HCT116 (cell line): ENCODE measurements at regions of chr12 and their contacts with region 1.

Region 1: DNA sequence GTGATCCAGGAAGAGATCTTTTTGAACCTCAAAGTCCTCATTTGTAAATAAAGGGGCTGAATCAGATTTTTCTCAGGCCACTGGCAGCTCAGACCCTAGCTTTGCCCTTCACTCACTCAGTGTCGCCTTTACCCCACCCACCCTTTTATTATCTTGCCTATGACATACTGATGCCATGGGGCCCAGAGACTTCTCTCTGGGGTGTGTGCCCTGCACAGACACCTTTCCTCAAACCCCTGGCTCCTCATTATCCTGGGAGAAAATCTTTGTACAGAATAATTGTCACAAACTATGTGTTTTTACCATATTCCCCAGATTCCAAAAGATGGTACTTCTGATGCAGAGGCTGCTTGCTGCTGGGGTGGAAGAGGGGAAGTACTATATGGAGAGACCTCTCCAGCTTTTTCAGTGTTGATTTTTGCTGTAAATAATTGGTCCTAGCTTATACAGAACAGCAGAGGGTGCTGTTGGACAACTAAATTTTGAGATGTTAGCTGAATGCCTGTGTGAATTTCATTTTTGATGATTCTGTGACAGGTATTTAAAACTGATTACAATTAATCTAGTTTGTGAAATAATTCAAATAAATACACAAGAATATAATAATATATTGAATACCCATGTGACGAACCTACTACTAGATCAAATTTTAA is 53.9 kb upstream of the DCD start:
- DNase-seq: peak; percentile 37
- ATAC-seq: peak; percentile 78
- H3K4me3 ChIP-seq: no peak overlapping the region
- H3K27ac ChIP-seq: no peak overlapping the region
- H3K4me1 ChIP-seq: no peaks in the 10 kb centered on the region
- H3K27me3 ChIP-seq: peaks cover 36% of the 10 kb centered on the region
- CTCF ChIP-seq: peak; percentile 51 to 66 (median 61); a peak in 5 of 6 replicates
- POLR2A ChIP-seq: no peak
- RAD21 ChIP-seq: peak; percentile 71

Region 2: GRCh38 chr12:54191550-54192022 is 510.5 kb before region 1 on chr12:
- CTCF ChIA-PET with region 1: no interaction called
- POLR2A ChIA-PET with region 1: no interaction called
- RAD21 ChIA-PET with region 1: no interaction called
- intact Hi-C with region 1: no loop called
- DNase-seq: peak; percentile 77
- ATAC-seq: peak; percentile 71
- H3K4me3 ChIP-seq: no peak overlapping the region
- H3K27ac ChIP-seq: no peak overlapping the region
- H3K4me1 ChIP-seq: peaks cover 5 to 33% of the 10 kb centered on the region in 2 experiments
- H3K27me3 ChIP-seq: no peaks in the 10 kb centered on the region
- CTCF ChIP-seq: peak; percentile 80 to 92 (median 90)
- POLR2A ChIP-seq: no peak
- RAD21 ChIP-seq: peak; percentile 89

Region 3: GRCh38 chr12:54596526-54596946 is 105.5 kb before region 1 on chr12:
- CTCF ChIA-PET with region 1: interaction called, 12 read pairs
- POLR2A ChIA-PET with region 1: interaction called, 4 read pairs
- RAD21 ChIA-PET with region 1: no interaction called
- intact Hi-C with region 1: no loop called
- DNase-seq: peak; percentile 57
- ATAC-seq: peak; percentile 95
- H3K4me3 ChIP-seq: no peak overlapping the region
- H3K27ac ChIP-seq: no peak overlapping the region
- H3K4me1 ChIP-seq: no peaks in the 10 kb centered on the region
- H3K27me3 ChIP-seq: no peaks in the 10 kb centered on the region; the same call in 1 of the 2 replicates
- CTCF ChIP-seq: peak; percentile 69 to 91 (median 90)
- POLR2A ChIP-seq: no peak
- RAD21 ChIP-seq: peak; percentile 69

Region 4: GRCh38 chr12:54723379-54724256 is 21.6 kb after region 1 on chr12:
- CTCF ChIA-PET with region 1: interaction called, 12 read pairs
- POLR2A ChIA-PET with region 1: no interaction called
- RAD21 ChIA-PET with region 1: no interaction called
- intact Hi-C with region 1: no loop called
- DNase-seq: peak; percentile 13
- ATAC-seq: peak; percentile 74
- H3K4me3 ChIP-seq: no peak overlapping the region
- H3K27ac ChIP-seq: no peak overlapping the region
- H3K4me1 ChIP-seq: no peaks in the 10 kb centered on the region
- H3K27me3 ChIP-seq: peaks cover 43% of the 10 kb centered on the region
- CTCF ChIP-seq: peak; percentile 7 to 66 (median 62); a peak in 4 of 6 replicates
- POLR2A ChIP-seq: no peak
- RAD21 ChIP-seq: no peak

Region 5: GRCh38 chr12:54958048-54958658 is 256.1 kb after region 1 on chr12:
- CTCF ChIA-PET with region 1: interaction called, 10 read pairs
- POLR2A ChIA-PET with region 1: no interaction called
- RAD21 ChIA-PET with region 1: no interaction called
- intact Hi-C with region 1: loop called (anchors 2 kb)
- DNase-seq: peak; percentile 53
- ATAC-seq: peak; percentile 76
- H3K4me3 ChIP-seq: no peak overlapping the region
- H3K27ac ChIP-seq: no peak overlapping the region
- H3K4me1 ChIP-seq: no peaks in the 10 kb centered on the region
- H3K27me3 ChIP-seq: peaks cover 85% of the 10 kb centered on the region
- CTCF ChIP-seq: peak; percentile 53 to 82 (median 76)
- POLR2A ChIP-seq: no peak
- RAD21 ChIP-seq: peak; percentile 93